PC-9 (cell line): ENCODE measurements at regions of chr13 and their contacts with region 1.

Region 1: GRCh38 chr13:109275852-109276251 is 510.5 kb downstream of the IRS2 start:
- DNase-seq: no peak
- H3K4me3 ChIP-seq: no peak overlapping the region
- H3K27ac ChIP-seq: no peak overlapping the region
- H3K4me1 ChIP-seq: peaks cover 47% of the 10 kb centered on the region
- H3K27me3 ChIP-seq: no peaks in the 10 kb centered on the region
- CTCF ChIP-seq: peak; percentile 46; the same call in 1 of the 2 replicates

Region 2: GRCh38 chr13:109331898-109332297 is 56.0 kb after region 1 on chr13:
- CTCF ChIA-PET with region 1: no interaction called
- POLR2A ChIA-PET with region 1: interaction called, 3 read pairs
- intact Hi-C with region 1: loop called (anchors 2 kb)
- DNase-seq: peak in 1 of 2 experiments; percentile 49
- H3K4me3 ChIP-seq: no peak overlapping the region
- H3K27ac ChIP-seq: no peak overlapping the region
- H3K4me1 ChIP-seq: peaks cover 23% of the 10 kb centered on the region
- H3K27me3 ChIP-seq: no peaks in the 10 kb centered on the region
- CTCF ChIP-seq: no peak

Region 3: GRCh38 chr13:109586509-109587346 is 310.9 kb after region 1 on chr13:
- CTCF ChIA-PET with region 1: no interaction called
- POLR2A ChIA-PET with region 1: no interaction called
- intact Hi-C with region 1: loop called (anchors 5 kb)
- DNase-seq: peak; percentile 37 to 98
- H3K4me3 ChIP-seq: peak overlapping the region; percentile 4; the same call in 1 of the 2 replicates
- H3K27ac ChIP-seq: peak overlapping the region; percentile 87
- H3K4me1 ChIP-seq: peaks cover 46% of the 10 kb centered on the region
- H3K27me3 ChIP-seq: no peaks in the 10 kb centered on the region
- CTCF ChIP-seq: no peak; the same call in 1 of the 2 replicates

Region 4: DNA sequence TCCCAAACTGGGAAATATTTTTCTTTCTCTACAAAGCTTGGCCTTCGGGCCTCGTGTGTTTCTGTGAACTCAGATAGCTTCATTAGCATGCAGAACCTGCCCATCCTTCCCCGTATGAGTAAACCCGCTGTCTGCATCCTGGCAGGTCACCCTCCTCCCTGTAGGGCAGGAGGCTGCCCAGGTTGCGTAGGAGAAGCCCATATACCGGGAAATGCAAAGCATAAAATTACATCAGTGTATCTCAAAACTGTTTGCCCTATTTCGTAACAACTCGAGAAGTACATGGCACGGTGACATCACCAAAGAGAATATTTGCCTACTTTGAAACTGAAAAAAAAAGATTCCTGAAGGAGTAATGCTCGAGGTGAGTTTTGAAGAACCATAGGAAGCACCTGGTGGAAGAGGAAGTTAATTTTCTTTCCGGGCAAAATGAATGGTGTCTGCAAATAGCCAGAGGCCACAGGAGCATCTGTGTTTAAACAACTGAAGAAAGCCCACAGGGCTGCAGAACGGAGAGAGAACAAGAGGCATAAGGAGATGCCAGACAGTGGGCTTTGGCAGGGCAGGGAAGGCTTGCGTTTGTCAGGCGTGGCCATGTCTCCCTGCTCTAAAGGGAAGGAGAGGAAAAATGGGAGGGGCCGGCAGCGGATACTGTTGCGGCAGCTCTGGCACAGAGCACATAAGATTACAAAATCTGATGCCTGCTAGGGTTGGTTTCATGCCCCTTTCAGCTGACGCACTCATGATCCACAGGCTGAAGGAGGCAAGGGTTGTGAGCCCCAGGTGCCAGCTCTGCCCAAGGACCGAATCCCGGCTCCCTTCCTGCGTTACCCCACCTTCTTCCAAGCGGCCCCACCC is 429.1 kb after region 1 on chr13:
- CTCF ChIA-PET with region 1: no interaction called
- POLR2A ChIA-PET with region 1: interaction called, 7 read pairs
- intact Hi-C with region 1: loop called (anchors 1 kb)
- DNase-seq: peak; percentile 41 to 96
- H3K4me3 ChIP-seq: peak overlapping the region; percentile 25; the same call in 1 of the 2 replicates
- H3K27ac ChIP-seq: peak overlapping the region; percentile 89
- H3K4me1 ChIP-seq: peaks cover 29% of the 10 kb centered on the region
- H3K27me3 ChIP-seq: no peaks in the 10 kb centered on the region
- CTCF ChIP-seq: no peak

Region 5: DNA sequence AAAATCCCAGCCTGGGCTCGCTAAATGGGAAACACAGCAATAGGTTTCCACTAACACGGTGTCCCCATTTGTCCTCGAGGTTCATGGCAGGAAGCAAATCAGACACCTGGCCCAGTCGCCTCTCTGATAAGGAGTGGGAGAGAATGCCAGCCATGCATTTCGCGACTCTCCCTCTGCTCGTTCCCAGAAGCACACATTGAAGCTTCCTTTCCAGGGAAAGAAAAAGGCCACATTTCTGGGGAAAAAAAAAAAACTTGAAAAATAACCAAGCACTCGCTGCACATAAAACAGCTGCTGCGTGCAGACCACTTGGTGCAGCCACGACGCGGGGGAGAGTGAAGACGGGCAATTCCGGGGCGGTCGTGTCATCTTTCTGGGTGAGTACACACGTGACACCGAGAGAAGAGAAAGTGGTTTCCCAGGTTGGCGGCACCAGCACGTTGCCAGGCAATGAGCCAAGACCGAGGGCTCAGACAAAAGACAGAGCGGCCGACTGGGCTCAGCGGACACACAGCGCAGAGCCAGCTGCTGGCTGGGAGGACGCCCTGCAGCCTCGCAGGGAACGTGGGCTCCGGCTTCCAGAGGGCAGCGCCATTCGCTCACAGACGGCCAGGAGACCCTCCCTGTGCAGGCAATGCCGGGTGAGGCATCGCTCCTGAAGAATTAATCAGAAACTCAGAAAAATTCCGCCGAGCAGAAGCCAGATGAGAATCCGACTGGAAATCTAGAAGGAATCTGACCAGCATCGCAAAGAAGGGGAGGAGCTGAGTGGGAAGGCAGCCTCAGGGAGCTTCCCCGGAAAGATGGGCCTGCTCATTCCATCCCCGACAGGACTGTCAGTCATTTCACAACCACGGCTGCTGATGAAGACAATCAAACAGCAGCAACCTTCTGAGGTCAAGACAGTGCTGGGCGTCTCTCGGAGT is 593.7 kb after region 1 on chr13:
- CTCF ChIA-PET with region 1: no interaction called
- POLR2A ChIA-PET with region 1: no interaction called
- intact Hi-C with region 1: loop called (anchors 5 kb)
- DNase-seq: peak; percentile 82
- H3K4me3 ChIP-seq: peak overlapping the region; percentile 54; the same call in 1 of the 2 replicates
- H3K27ac ChIP-seq: peak overlapping the region; percentile 79
- H3K4me1 ChIP-seq: peaks cover 82% of the 10 kb centered on the region
- H3K27me3 ChIP-seq: no peaks in the 10 kb centered on the region
- CTCF ChIP-seq: peak; percentile 40; the same call in 1 of the 2 replicates

Region 6: GRCh38 chr13:110108347-110109174 is 832.7 kb after region 1 on chr13:
- CTCF ChIA-PET with region 1: no interaction called
- POLR2A ChIA-PET with region 1: no interaction called
- intact Hi-C with region 1: loop called (anchors 5 kb)
- DNase-seq: peak; percentile 86 to 88
- H3K4me3 ChIP-seq: no peak overlapping the region
- H3K27ac ChIP-seq: peak overlapping the region; percentile 8; the same call in 1 of the 2 replicates
- H3K4me1 ChIP-seq: peaks cover 24% of the 10 kb centered on the region
- H3K27me3 ChIP-seq: no peaks in the 10 kb centered on the region
- CTCF ChIP-seq: peak; percentile 95